CD4-positive, alpha-beta memory T cell (primary cell): ENCODE measurements at regions of chr14 and their contacts with region 1.

Region 1: GRCh38 chr14:22918804-22919600 is at the start of gene RBM23:
- DNase-seq: peak; percentile 99 to 100 (median 100)
- H3K4me3 ChIP-seq: peak within 1 kb of the TSS; percentile 67 to 93
- H3K4me3 Mint-ChIP-seq: peak within 1 kb of the TSS; percentile 94 to 99 (median 96)
- H3K27ac ChIP-seq: peak within 1 kb of the TSS; percentile 98
- H3K27ac Mint-ChIP-seq: peak within 1 kb of the TSS; percentile 99 to 100 (median 100)
- H3K4me1 ChIP-seq: peaks cover 40% of the 10 kb centered on the region
- H3K4me1 Mint-ChIP-seq: peaks cover 13 to 56% (median 33%) of the 10 kb centered on the region in 4 donors
- H3K27me3 ChIP-seq: no peaks in the 10 kb centered on the region
- H3K27me3 Mint-ChIP-seq: peaks cover 0 to 4% of the 10 kb centered on the region in 2 donors
- total RNA-seq, gene RBM23: 119 to 123 TPM

Region 2: DNA sequence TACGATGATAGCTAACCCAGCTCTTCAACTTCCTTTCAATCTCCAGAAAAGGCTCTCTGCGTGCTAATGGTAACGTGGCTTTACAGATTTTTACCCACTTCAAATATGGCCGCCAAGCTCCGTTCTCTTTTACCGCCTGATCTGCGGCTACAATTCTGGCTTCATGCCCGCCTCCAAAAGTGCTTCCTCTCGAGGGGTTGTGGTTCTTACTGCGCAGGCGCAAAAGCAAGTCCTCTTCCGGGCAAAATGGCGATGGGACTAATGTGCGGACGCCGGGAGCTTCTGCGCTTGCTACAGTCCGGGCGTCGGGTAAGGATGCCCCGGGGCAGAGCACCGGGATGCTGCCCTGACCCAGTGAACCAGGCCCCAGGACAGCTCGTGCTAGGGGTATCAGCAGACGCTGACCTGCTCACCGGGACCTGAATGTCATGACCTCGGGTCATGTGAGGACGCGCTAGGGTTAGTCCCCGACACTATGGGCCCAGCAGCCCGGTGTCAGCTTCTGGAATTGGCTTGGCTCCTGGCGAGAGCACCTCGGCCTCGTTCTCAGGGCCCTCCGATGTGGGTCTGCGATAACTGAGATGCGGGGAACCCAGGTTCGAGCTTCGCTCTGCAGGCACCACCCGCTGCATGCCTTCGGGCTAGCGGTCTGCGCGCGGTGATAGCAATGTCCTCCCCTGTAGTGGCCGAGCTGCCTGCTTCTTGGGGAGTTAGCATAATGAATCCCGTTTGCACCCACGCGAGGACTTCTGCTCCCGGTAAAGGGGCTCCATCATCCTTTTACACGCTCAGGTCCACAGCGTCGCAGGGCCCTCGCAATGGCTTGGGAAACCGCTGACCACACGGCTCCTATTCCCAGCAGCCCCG is 152.3 kb before region 1 on chr14 and contains the start of gene OXA1L:
- CTCF ChIA-PET with region 1: no interaction called
- POLR2A ChIA-PET with region 1: interaction called, 15 read pairs
- intact Hi-C with region 1: loop called (anchors 1 kb)
- DNase-seq: peak; percentile 95 to 98 (median 98)
- H3K4me3 ChIP-seq: peak within 1 kb of the TSS; percentile 62 to 88
- H3K4me3 Mint-ChIP-seq: peak within 1 kb of the TSS; percentile 85 to 96 (median 94)
- H3K27ac ChIP-seq: peak within 1 kb of the TSS; percentile 88
- H3K27ac Mint-ChIP-seq: peak within 1 kb of the TSS; percentile 86 to 100 (median 98)
- H3K4me1 ChIP-seq: peaks cover 24% of the 10 kb centered on the region
- H3K4me1 Mint-ChIP-seq: peaks cover 26 to 39% (median 34%) of the 10 kb centered on the region in 4 donors
- H3K27me3 ChIP-seq: no peaks in the 10 kb centered on the region
- H3K27me3 Mint-ChIP-seq: no peaks in the 10 kb centered on the region
- total RNA-seq, gene OXA1L: 129 to 137 TPM

Region 3: GRCh38 chr14:22791301-22791700 is 127.7 kb before region 1 on chr14:
- CTCF ChIA-PET with region 1: no interaction called
- POLR2A ChIA-PET with region 1: no interaction called
- intact Hi-C with region 1: no loop called
- DNase-seq: no peak
- H3K4me3 ChIP-seq: no peak overlapping the region
- H3K4me3 Mint-ChIP-seq: no peak overlapping the region
- H3K27ac ChIP-seq: no peak overlapping the region
- H3K27ac Mint-ChIP-seq: no peak overlapping the region
- H3K4me1 ChIP-seq: no peaks in the 10 kb centered on the region
- H3K4me1 Mint-ChIP-seq: peaks cover 0 to 2% (median 0%) of the 10 kb centered on the region in 4 donors
- H3K27me3 ChIP-seq: no peaks in the 10 kb centered on the region
- H3K27me3 Mint-ChIP-seq: peaks cover 9 to 12% of the 10 kb centered on the region in 2 donors

Region 4: GRCh38 chr14:22829661-22830442 is 89.2 kb before region 1 on chr14 and contains the start of gene MRPL52:
- CTCF ChIA-PET with region 1: interaction called, 4 read pairs
- POLR2A ChIA-PET with region 1: interaction called, 15 read pairs
- intact Hi-C with region 1: loop called (anchors 5 kb)
- DNase-seq: peak; percentile 86 to 93 (median 88)
- H3K4me3 ChIP-seq: peak within 1 kb of the TSS; percentile 80 to 85
- H3K4me3 Mint-ChIP-seq: peak within 1 kb of the TSS; percentile 91 to 96 (median 92)
- H3K27ac ChIP-seq: peak within 1 kb of the TSS; percentile 85
- H3K27ac Mint-ChIP-seq: peak within 1 kb of the TSS; percentile 96 to 99 (median 98)
- H3K4me1 ChIP-seq: peaks cover 18% of the 10 kb centered on the region
- H3K4me1 Mint-ChIP-seq: peaks cover 17 to 32% (median 24%) of the 10 kb centered on the region in 4 donors
- H3K27me3 ChIP-seq: no peaks in the 10 kb centered on the region
- H3K27me3 Mint-ChIP-seq: peaks cover 0 to 1% of the 10 kb centered on the region in 2 donors
- total RNA-seq, gene MRPL52: 58.0 to 68.3 TPM

Region 5: GRCh38 chr14:22886500-22887259 is 32.3 kb before region 1 on chr14:
- CTCF ChIA-PET with region 1: interaction called, 6 read pairs
- POLR2A ChIA-PET with region 1: interaction called, 52 read pairs
- intact Hi-C with region 1: loop called (anchors 1 kb)
- DNase-seq: peak; percentile 73 to 85 (median 78)
- H3K4me3 ChIP-seq: peak overlapping the region; percentile 24 to 30
- H3K4me3 Mint-ChIP-seq: peak overlapping the region; percentile 87 to 97 (median 94)
- H3K27ac ChIP-seq: peak overlapping the region; percentile 68
- H3K27ac Mint-ChIP-seq: peak overlapping the region; percentile 93 to 99 (median 97)
- H3K4me1 ChIP-seq: peaks cover 57% of the 10 kb centered on the region
- H3K4me1 Mint-ChIP-seq: peaks cover 34 to 85% (median 59%) of the 10 kb centered on the region in 4 donors
- H3K27me3 ChIP-seq: no peaks in the 10 kb centered on the region
- H3K27me3 Mint-ChIP-seq: no peaks in the 10 kb centered on the region

Region 6: DNA sequence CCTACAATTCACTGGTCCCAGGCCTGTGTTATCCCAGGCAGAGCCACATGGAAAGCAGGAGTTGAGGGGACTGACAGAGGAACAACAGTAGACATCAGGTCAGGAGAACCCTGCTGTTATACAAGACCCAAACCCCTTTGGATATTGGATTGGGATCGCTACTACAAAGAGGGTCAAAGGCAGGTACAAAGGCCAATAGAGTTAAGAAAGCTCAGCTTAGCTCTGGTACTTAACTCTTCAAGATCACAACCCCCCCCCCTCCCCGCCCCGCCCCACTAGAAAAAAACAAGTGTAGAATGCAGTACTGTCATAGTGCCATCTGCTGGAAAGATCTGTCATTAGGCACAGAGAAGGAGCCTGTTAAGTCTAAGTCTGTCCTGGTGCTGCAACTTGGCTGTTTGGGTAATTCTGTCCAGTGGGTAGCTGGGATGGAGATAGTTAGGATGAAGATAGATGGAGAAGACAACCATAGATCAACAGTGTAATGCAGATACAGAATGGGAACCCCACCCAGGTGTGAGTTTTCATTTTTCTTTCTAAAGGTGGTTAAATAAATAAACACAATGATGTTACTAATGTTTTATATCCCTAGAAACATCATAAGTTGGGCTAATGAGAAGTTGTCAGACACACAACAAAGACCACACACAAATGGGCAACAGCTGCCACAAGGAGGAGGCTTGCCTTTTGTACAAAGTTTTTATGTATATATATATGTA is 18.8 kb before region 1 on chr14:
- CTCF ChIA-PET with region 1: interaction called, 45 read pairs
- POLR2A ChIA-PET with region 1: interaction called, 4 read pairs
- intact Hi-C with region 1: no loop called
- DNase-seq: peak; percentile 66 to 72 (median 67)
- H3K4me3 ChIP-seq: no peak overlapping the region
- H3K4me3 Mint-ChIP-seq: no peak overlapping the region
- H3K27ac ChIP-seq: no peak overlapping the region
- H3K27ac Mint-ChIP-seq: peak overlapping the region; percentile 12 to 65 (median 54)
- H3K4me1 ChIP-seq: peaks cover 4% of the 10 kb centered on the region
- H3K4me1 Mint-ChIP-seq: peaks cover 5 to 15% (median 5%) of the 10 kb centered on the region in 4 donors
- H3K27me3 ChIP-seq: no peaks in the 10 kb centered on the region
- H3K27me3 Mint-ChIP-seq: no peaks in the 10 kb centered on the region

Region 7: DNA sequence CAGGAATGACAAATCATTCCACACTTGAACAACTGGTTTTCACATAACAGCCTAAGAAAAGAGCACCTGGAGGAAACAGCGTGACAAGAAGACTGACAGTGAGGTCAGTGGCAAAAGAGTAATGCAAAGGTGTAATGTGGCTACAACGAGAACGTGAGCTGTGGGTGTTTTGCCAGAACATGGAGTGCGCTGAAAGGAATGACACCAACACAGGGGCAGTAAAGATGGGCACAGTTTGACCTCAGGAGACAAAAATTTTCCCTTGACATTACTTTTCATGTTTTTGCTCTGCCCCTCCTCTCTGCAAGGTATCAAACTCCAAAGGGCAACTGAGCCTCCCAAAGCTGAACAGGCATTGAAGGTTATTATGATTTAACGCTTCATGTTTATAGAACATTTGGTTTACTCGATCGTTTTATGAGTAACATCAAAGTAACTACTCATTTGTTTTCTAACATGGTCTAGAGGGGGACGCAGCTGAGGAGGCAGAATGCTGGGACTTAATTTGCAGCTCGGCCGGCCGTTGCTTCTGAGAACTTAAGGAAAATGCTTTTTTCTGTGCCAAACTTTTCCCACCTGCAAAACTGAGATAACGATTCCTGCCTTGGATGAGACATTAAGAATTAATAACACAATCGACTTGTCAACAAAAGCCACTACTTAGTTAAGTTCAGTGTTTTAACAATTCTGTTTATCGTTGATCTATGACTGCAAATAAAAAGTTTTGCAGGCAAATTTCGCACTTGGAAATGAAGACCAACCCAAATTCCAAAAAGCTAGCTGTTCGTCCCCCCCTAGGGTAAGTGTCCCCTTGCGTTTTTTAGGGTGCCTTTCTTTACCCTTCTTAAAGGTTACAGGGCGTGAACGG is 36.9 kb after region 1 on chr14:
- CTCF ChIA-PET with region 1: interaction called, 8 read pairs
- POLR2A ChIA-PET with region 1: interaction called, 23 read pairs
- intact Hi-C with region 1: no loop called
- DNase-seq: peak in 1 of 5 donors; percentile 11
- H3K4me3 ChIP-seq: peak overlapping the region; percentile 30 to 89
- H3K4me3 Mint-ChIP-seq: peak overlapping the region; percentile 91 to 94 (median 92)
- H3K27ac ChIP-seq: peak overlapping the region; percentile 79
- H3K27ac Mint-ChIP-seq: peak overlapping the region; percentile 92 to 95 (median 93)
- H3K4me1 ChIP-seq: peaks cover 16% of the 10 kb centered on the region
- H3K4me1 Mint-ChIP-seq: peaks cover 13 to 22% (median 16%) of the 10 kb centered on the region in 4 donors
- H3K27me3 ChIP-seq: no peaks in the 10 kb centered on the region
- H3K27me3 Mint-ChIP-seq: no peaks in the 10 kb centered on the region